ENCODE measurements at regions of chr3 and their contacts with region 1.

Region 1: GRCh38 chr3:105369500-105370371 is 3.0 kb downstream of the ALCAM start:
- DNase-seq: peak; percentile 66 to 85 (median 79)
- H3K4me3 ChIP-seq: peak overlapping the region; percentile 37 to 83 (median 67)
- H3K27ac ChIP-seq: peak overlapping the region in 4 of 5 donors; percentile 60 to 87 (median 86)
- H3K4me1 ChIP-seq: peaks cover 9 to 15% of the 10 kb centered on the region in 2 donors
- H3K27me3 ChIP-seq: no peaks in the 10 kb centered on the region
- CTCF ChIP-seq: peak; percentile 50 to 80 (median 72)
- POLR2A ChIP-seq: no peak

Region 2: DNA sequence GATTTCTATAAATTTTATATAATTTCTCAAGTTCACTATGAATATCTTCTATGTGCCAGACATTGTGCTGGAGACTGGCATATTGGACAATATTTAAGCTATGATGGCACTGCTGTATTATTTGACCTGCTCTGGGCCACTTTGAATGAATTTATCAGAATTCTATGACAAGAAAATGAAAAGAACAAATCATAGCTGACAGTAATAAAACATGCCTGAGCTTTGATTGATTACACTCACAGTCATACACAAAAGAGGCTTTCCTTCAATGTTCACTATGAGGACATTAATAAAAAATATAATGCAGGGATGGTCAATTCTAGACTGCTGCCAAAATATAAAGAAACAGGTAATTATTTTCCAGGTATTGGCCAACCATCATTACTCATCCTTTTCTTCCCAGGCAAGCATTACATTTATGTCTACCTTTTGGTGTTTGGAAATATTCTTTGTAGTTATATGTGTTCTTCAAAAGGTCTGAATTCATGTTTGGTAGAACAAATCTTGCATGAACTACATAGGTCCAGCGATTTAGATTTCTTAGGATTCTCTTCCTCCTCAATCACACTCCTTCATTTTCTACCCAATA is 84.0 kb before region 1 on chr3:
- intact Hi-C with region 1: no loop called
- DNase-seq: no peak
- H3K4me3 ChIP-seq: no peak overlapping the region
- H3K27ac ChIP-seq: no peak overlapping the region
- H3K4me1 ChIP-seq: no peaks in the 10 kb centered on the region
- H3K27me3 ChIP-seq: no peaks in the 10 kb centered on the region
- CTCF ChIP-seq: no peak
- POLR2A ChIP-seq: no peak

Region 3: GRCh38 chr3:105518806-105519418 is 149.2 kb after region 1 on chr3:
- intact Hi-C with region 1: loop called in 1 of 2 experiments (anchors 10 kb)
- DNase-seq: peak in 1 of 7 donors; percentile 26
- H3K4me3 ChIP-seq: no peak overlapping the region
- H3K27ac ChIP-seq: no peak overlapping the region
- H3K4me1 ChIP-seq: no peaks in the 10 kb centered on the region
- H3K27me3 ChIP-seq: no peaks in the 10 kb centered on the region
- CTCF ChIP-seq: peak; percentile 46 to 76 (median 63)
- POLR2A ChIP-seq: no peak